ENCODE measurements at regions of chr1 and their contacts with region 1.

Region 1: GRCh38 chr1:199684686-199685273 is 342.7 kb upstream of the NR5A2 start:
- DNase-seq: peak in 21 of 42 donors; percentile 4 to 69 (median 28)

Region 2: GRCh38 chr1:200488375-200489165 is 803.8 kb after region 1 on chr1:
- intact Hi-C with region 1: loop called (anchors 10 kb)
- DNase-seq: peak in 37 of 42 donors; percentile 14 to 89 (median 68)

Region 3: DNA sequence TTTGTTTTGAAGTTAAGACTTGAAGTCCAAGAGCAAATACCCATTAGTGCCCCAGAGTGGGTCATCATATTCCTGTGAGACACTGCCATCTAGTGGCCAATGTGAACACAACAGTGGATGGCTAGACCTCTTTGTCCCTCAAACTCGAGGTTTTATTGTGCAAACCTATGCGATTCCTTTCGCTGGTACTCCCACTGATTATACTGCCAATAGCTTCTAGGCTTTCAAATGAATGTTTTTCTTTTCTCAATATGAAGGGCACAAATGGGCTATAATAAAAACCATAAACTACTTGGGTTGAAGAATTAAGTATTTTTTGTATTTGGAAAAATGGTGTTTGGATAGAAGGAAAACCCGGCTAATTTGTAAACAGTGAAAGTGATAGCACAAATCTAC is 825.4 kb after region 1 on chr1:
- intact Hi-C with region 1: loop called (anchors 10 kb)
- DNase-seq: peak in 41 of 42 donors; percentile 19 to 92 (median 81)

Measured in head of caudate nucleus (tissue), 42 donors.